ENCODE measurements at regions of chr1 and their contacts with region 1.

Region 1: GRCh38 chr1:203326830-203327683 is 21.7 kb downstream of the BTG2 start:
- DNase-seq: peak; percentile 90 to 96 (median 94)
- ATAC-seq: peak; percentile 84
- H3K4me3 ChIP-seq: peak overlapping the region; percentile 72
- H3K4me3 Mint-ChIP-seq: peak overlapping the region; percentile 80 to 89 (median 86)
- H3K27ac ChIP-seq: peak overlapping the region; percentile 98
- H3K27ac Mint-ChIP-seq: peak overlapping the region; percentile 90 to 100 (median 99)
- H3K4me1 ChIP-seq: peaks cover 55 to 56% of the 10 kb centered on the region in 2 donors
- H3K4me1 Mint-ChIP-seq: peaks cover 40 to 73% (median 70%) of the 10 kb centered on the region in 7 donors
- H3K27me3 ChIP-seq: no peaks in the 10 kb centered on the region
- H3K27me3 Mint-ChIP-seq: no peaks in the 10 kb centered on the region

Region 2: GRCh38 chr1:202160377-202160940 is 1166.6 kb before region 1 on chr1 and contains the start of gene PTPN7:
- CTCF ChIA-PET with region 1: no interaction called
- POLR2A ChIA-PET with region 1: no interaction called
- intact Hi-C with region 1: loop called in 1 of 2 experiments (anchors 10 kb)
- DNase-seq: peak; percentile 58 to 84 (median 80)
- ATAC-seq: peak; percentile 80
- H3K4me3 ChIP-seq: peak within 1 kb of the TSS; percentile 98
- H3K4me3 Mint-ChIP-seq: peak within 1 kb of the TSS; percentile 91 to 99 (median 98)
- H3K27ac ChIP-seq: peak within 1 kb of the TSS; percentile 90
- H3K27ac Mint-ChIP-seq: peak within 1 kb of the TSS; percentile 97 to 99 (median 98)
- H3K4me1 ChIP-seq: peaks cover 77 to 84% of the 10 kb centered on the region in 2 donors
- H3K4me1 Mint-ChIP-seq: peaks cover 47 to 98% (median 82%) of the 10 kb centered on the region in 7 donors
- H3K27me3 ChIP-seq: no peaks in the 10 kb centered on the region
- H3K27me3 Mint-ChIP-seq: no peaks in the 10 kb centered on the region
- total RNA-seq, gene PTPN7: 43.2 to 258 (median 97.0) TPM

Region 3: GRCh38 chr1:203273206-203273868 is 53.7 kb before region 1 on chr1:
- CTCF ChIA-PET with region 1: interaction called, 215 read pairs
- POLR2A ChIA-PET with region 1: interaction called, 1,812 read pairs
- intact Hi-C with region 1: loop called (anchors 1 kb)
- DNase-seq: peak; percentile 84 to 95 (median 91)
- ATAC-seq: peak; percentile 82
- H3K4me3 ChIP-seq: peak overlapping the region; percentile 55
- H3K4me3 Mint-ChIP-seq: peak overlapping the region; percentile 76 to 83 (median 80)
- H3K27ac ChIP-seq: peak overlapping the region; percentile 75
- H3K27ac Mint-ChIP-seq: peak overlapping the region; percentile 83 to 98 (median 94)
- H3K4me1 ChIP-seq: peaks cover 11 to 64% of the 10 kb centered on the region in 2 donors
- H3K4me1 Mint-ChIP-seq: peaks cover 20 to 71% (median 65%) of the 10 kb centered on the region in 7 donors
- H3K27me3 ChIP-seq: no peaks in the 10 kb centered on the region
- H3K27me3 Mint-ChIP-seq: no peaks in the 10 kb centered on the region

Region 4: GRCh38 chr1:203299169-203299568 is 27.9 kb before region 1 on chr1:
- CTCF ChIA-PET with region 1: interaction called, 6 read pairs
- POLR2A ChIA-PET with region 1: interaction called, 1,812 read pairs
- intact Hi-C with region 1: no loop called
- DNase-seq: no peak
- ATAC-seq: peak; percentile 47
- H3K4me3 ChIP-seq: no peak overlapping the region
- H3K4me3 Mint-ChIP-seq: no peak overlapping the region
- H3K27ac ChIP-seq: no peak overlapping the region
- H3K27ac Mint-ChIP-seq: peak overlapping the region in 6 of 9 donors; percentile 7 to 68 (median 47)
- H3K4me1 ChIP-seq: peaks cover 4 to 8% of the 10 kb centered on the region in 2 donors
- H3K4me1 Mint-ChIP-seq: peaks cover 49 to 81% (median 65%) of the 10 kb centered on the region in 7 donors
- H3K27me3 ChIP-seq: no peaks in the 10 kb centered on the region
- H3K27me3 Mint-ChIP-seq: no peaks in the 10 kb centered on the region

Region 5: DNA sequence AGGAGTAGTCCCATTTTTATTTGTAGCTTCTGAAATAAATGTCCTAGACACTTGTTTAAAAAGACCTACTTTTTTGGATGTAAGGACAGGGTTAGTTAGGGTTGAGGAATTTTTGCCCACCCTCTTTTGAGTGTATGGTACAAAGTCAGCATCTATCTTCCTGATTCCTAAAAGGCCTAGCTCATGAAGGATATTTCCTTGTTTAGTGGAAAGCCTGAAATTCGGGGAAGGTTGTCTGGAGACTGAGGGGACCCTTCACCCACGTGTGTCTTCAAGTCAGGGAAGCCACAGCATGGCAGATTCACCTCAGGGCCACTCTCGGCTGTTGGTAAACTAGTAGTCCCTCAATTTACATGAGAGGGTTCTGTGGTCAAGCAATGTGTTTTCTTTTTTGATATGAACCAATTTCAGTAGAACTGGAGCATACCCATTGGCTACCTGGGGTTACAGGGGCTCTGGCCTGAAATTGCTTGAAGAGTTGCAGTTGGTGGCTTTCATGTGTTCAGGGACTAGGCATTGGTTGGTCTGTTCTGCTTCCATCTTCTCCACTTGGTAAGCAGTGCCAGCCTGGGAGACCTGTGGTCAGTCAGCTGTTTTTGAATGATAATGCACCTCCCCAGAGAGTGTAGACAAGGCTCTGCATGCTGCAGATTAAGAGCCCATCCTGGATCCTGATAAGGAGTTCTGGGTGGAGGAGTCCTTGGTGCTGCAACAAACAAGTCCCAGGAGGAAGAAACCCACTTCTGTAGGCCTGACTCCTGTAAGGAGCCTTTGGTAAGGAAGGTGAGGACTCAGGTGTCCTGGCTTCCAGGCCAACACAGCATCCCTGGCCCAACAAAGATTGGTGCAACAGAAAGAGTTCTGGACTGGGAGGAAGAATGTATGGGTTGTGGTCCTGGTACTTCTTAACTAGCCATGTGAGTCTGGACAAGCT is 15.4 kb before region 1 on chr1:
- CTCF ChIA-PET with region 1: interaction called, 137 read pairs
- POLR2A ChIA-PET with region 1: interaction called, 1,016 read pairs
- intact Hi-C with region 1: no loop called
- DNase-seq: no peak
- ATAC-seq: no peak
- H3K4me3 ChIP-seq: no peak overlapping the region
- H3K4me3 Mint-ChIP-seq: peak overlapping the region; percentile 2 to 99 (median 68)
- H3K27ac ChIP-seq: peak overlapping the region; percentile 43
- H3K27ac Mint-ChIP-seq: peak overlapping the region; percentile 25 to 100 (median 97)
- H3K4me1 ChIP-seq: peaks cover 23 to 30% of the 10 kb centered on the region in 2 donors
- H3K4me1 Mint-ChIP-seq: peaks cover 48 to 69% (median 56%) of the 10 kb centered on the region in 7 donors
- H3K27me3 ChIP-seq: no peaks in the 10 kb centered on the region
- H3K27me3 Mint-ChIP-seq: no peaks in the 10 kb centered on the region

Region 6: GRCh38 chr1:203402629-203403337 is 75.7 kb after region 1 on chr1:
- CTCF ChIA-PET with region 1: no interaction called
- POLR2A ChIA-PET with region 1: no interaction called
- intact Hi-C with region 1: no loop called
- DNase-seq: no peak
- ATAC-seq: peak; percentile 55
- H3K4me3 ChIP-seq: no peak overlapping the region
- H3K4me3 Mint-ChIP-seq: no peak overlapping the region
- H3K27ac ChIP-seq: no peak overlapping the region
- H3K27ac Mint-ChIP-seq: no peak overlapping the region
- H3K4me1 ChIP-seq: no peaks in the 10 kb centered on the region
- H3K4me1 Mint-ChIP-seq: peaks cover 0 to 2% (median 0%) of the 10 kb centered on the region in 7 donors
- H3K27me3 ChIP-seq: no peaks in the 10 kb centered on the region
- H3K27me3 Mint-ChIP-seq: peaks cover 26 to 44% (median 31%) of the 10 kb centered on the region in 5 donors

Region 7: DNA sequence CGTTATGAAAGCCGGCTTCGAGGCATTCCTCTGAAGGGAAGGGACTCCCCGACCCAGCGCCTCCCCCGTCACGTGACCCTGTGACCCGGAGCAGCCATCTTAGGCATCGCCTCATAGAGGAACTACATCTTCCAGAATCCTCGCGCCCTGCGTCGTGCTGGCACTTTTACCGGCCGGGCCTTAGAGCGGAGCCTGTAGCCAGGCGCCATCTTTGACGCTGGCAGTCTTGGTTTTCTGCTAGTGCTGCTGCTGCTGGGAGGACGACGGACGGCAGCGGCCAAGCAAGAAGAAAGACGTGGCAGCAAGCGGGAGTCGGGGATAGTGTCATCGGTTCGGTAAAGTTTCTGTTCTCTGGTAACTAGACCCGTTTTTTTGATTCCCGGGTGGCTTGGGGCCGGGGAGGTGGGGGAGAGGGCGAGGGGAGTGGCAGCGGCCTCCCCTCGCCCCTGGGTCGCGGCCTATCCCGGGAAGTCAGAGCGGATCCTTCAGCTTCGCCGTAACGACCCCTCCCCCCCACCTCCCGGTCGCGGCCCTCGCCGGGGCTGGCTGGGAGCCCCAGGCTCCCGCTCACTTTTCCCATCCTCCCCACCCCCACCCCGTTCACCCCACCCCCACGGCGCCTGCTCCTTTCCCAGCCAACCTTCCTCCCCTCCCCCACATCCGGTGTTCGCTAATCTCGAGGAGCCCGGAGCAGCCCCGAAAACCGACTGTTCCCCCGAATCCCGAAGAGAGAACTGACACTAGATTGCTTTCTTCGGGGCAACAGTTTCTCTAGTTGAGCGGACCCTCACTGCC is 468.6 kb after region 1 on chr1 and contains the starts of genes ZBED6 and ZC3H11A:
- CTCF ChIA-PET with region 1: no interaction called
- POLR2A ChIA-PET with region 1: no interaction called
- intact Hi-C with region 1: loop called (anchors 5 to 10 kb)
- DNase-seq: peak; percentile 85 to 100 (median 97)
- ATAC-seq: peak; percentile 99
- H3K4me3 ChIP-seq: peak within 1 kb of the TSS; percentile 80
- H3K4me3 Mint-ChIP-seq: peak within 1 kb of the TSS; percentile 94 to 98 (median 96)
- H3K27ac ChIP-seq: peak within 1 kb of the TSS; percentile 80
- H3K27ac Mint-ChIP-seq: peak within 1 kb of the TSS; percentile 82 to 98 (median 96)
- H3K4me1 ChIP-seq: peaks cover 35 to 36% of the 10 kb centered on the region in 2 donors
- H3K4me1 Mint-ChIP-seq: peaks cover 18 to 55% (median 48%) of the 10 kb centered on the region in 7 donors
- H3K27me3 ChIP-seq: no peaks in the 10 kb centered on the region
- H3K27me3 Mint-ChIP-seq: no peaks in the 10 kb centered on the region
- total RNA-seq, gene ZBED6: 23.8 to 36.1 (median 31.9) TPM
- total RNA-seq, gene ZC3H11A: 70.9 to 138 (median 91.6) TPM

Measured in naive thymus-derived CD4-positive, alpha-beta T cell (primary cell).